Posterior cingulate gyrus (tissue), 11 donors: ENCODE measurements at regions of chr5 and their contacts with region 1.

Region 1: GRCh38 chr5:81971712-81972495 is at the start of gene ATG10:
- DNase-seq: peak; percentile 86 to 99 (median 92)

Region 2: DNA sequence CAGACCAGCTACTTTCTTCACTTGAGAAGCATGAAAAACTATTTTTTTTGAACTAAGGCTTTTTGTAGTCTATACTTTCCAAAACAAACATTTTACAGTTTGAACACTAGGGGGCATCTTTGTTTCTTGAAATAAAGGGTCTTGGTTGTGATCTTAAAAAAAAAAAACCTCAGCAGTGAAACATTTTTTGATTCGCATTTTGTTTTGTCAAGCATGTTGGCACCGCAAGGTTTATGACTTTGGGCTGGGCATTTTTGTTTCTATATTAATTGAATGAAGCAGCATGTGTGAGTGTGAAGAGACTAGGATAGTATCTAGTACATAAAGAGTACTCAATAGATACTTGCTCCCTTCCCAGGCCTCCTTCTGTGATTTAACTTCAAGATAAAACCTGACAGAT is 546.3 kb before region 1 on chr5:
- intact Hi-C with region 1: loop called (anchors 5 kb)
- DNase-seq: no peak

Region 3: GRCh38 chr5:81590498-81591384 is 381.2 kb before region 1 on chr5:
- intact Hi-C with region 1: no loop called
- DNase-seq: no peak

Region 4: DNA sequence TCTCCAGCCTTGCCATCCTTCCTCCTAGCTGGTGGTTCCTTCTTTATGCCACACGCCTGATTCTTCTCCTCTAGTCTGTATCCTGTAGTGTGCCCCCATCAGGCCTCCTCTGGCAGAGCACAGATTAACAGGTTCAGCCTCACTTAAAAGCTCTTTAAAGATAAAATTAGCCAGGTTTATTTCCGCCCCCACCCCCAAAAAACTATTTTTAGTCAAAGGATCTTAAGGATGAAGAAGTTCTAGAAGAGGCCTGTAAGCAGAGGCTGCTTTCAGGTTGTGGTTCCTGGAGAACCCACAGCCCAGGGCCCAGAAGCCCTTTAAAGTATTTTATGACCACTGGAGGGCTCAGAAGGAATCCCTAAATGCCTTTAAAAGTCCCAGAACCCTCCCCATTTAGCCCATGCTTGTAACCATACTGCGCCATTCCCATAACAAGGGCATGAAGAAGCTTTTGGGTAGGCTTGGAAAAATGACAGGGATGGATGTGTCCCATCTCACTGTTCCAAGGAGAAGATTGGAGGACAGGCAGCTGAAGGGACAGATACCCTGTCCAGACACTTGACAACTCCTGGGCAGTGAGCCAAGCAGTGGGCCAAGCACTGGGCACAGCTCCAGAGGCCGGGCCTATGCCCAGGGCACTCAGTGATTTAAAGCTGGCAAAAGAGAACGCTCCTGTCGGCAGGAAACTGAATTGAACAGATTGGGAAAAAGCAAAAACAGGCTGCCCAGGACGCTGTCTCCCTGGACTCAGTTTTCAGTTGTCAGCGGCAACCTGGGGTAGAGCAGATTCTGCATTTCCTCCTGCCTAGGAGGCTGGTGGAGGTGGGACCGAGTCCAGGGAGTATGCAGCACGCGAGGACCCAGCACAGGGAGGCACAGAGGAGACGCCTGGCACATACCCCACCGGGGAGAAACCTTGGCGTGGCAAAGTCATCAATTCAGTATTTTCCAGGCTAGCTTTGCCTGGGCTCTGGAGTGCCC is 114.7 kb before region 1 on chr5:
- intact Hi-C with region 1: loop called (anchors 2 kb)
- DNase-seq: peak; percentile 52 to 96 (median 74)

Region 5: GRCh38 chr5:82564963-82565362 is 593.1 kb after region 1 on chr5:
- intact Hi-C with region 1: no loop called
- DNase-seq: no peak